IMR-90 (cell line): ENCODE measurements at regions of chr9 and their contacts with region 1.

Region 1: DNA sequence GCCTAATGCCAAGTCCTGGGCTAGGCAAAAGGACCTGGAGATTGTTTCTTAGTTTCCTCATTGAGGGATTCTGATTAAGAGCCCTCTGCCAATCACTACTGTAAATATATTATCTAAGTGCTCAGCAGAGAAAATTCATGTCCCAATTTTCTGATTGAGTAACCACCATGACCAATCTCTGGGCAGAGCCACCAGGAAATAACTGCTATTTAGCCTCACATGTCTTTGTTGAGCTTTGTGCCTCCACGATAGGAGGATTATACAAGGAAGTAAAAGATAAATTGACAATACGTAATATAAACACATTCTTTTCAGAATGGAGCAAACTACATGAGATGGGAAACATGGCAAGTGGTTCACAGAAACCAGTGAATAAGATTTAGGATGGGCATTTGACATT is 396.1 kb upstream of the PAPPA start:
- DNase-seq: no peak
- ATAC-seq: no peak
- H3K4me3 ChIP-seq: no peak overlapping the region
- H3K27ac ChIP-seq: no peak overlapping the region
- H3K4me1 ChIP-seq: no peaks in the 10 kb centered on the region
- H3K27me3 ChIP-seq: no peaks in the 10 kb centered on the region
- CTCF ChIP-seq: no peak
- POLR2A ChIP-seq: no peak
- RAD21 ChIP-seq: no peak

Region 2: GRCh38 chr9:116377479-116377779 is 620.0 kb after region 1 on chr9:
- CTCF ChIA-PET with region 1: no interaction called
- POLR2A ChIA-PET with region 1: interaction called, 17 read pairs
- dilution Hi-C with region 1: no loop called
- in situ Hi-C with region 1: no loop called
- intact Hi-C with region 1: no loop called
- DNase-seq: peak; percentile 75
- ATAC-seq: peak; percentile 86
- H3K4me3 ChIP-seq: no peak overlapping the region
- H3K27ac ChIP-seq: 0 out of 2 replicates have a peak overlapping the region, but pooled peaks have one; percentile 4
- H3K4me1 ChIP-seq: peaks cover 17% of the 10 kb centered on the region
- H3K27me3 ChIP-seq: no peaks in the 10 kb centered on the region
- CTCF ChIP-seq: no peak
- POLR2A ChIP-seq: no peak
- RAD21 ChIP-seq: no peak